IMR-90 (cell line): ENCODE measurements at regions of chr10 and their contacts with region 1.

Region 1: GRCh38 chr10:24920907-24921881 is 31.2 kb downstream of the PRTFDC1 start:
- DNase-seq: peak; percentile 99
- ATAC-seq: peak; percentile 100
- H3K4me3 ChIP-seq: no peak overlapping the region
- H3K27ac ChIP-seq: peak overlapping the region; percentile 80
- H3K4me1 ChIP-seq: peaks cover 2% of the 10 kb centered on the region; the same call in 1 of the 2 replicates
- H3K27me3 ChIP-seq: no peaks in the 10 kb centered on the region
- CTCF ChIP-seq: no peak
- POLR2A ChIP-seq: no peak
- RAD21 ChIP-seq: peak; percentile 44

Region 2: GRCh38 chr10:24866604-24867583 is 54.3 kb before region 1 on chr10:
- CTCF ChIA-PET with region 1: interaction called, 12 read pairs
- POLR2A ChIA-PET with region 1: no interaction called
- dilution Hi-C with region 1: no loop called
- in situ Hi-C with region 1: no loop called
- intact Hi-C with region 1: no loop called
- DNase-seq: peak; percentile 87
- ATAC-seq: peak; percentile 62
- H3K4me3 ChIP-seq: no peak overlapping the region
- H3K27ac ChIP-seq: no peak overlapping the region
- H3K4me1 ChIP-seq: peaks cover 9% of the 10 kb centered on the region
- H3K27me3 ChIP-seq: no peaks in the 10 kb centered on the region
- CTCF ChIP-seq: no peak
- POLR2A ChIP-seq: no peak
- RAD21 ChIP-seq: no peak